Esophagus muscularis mucosa (tissue), 4 donors: ENCODE measurements at regions of chr12 and their contacts with region 1.

Region 1: GRCh38 chr12:106302401-106303201 is at the start of gene TCP11L2:
- DNase-seq: peak; percentile 97
- H3K4me3 ChIP-seq: peak within 1 kb of the TSS; percentile 83 to 97 (median 94)
- H3K27ac ChIP-seq: peak within 1 kb of the TSS; percentile 87 to 97 (median 97)
- H3K4me1 ChIP-seq: peaks cover 47 to 67% (median 59%) of the 10 kb centered on the region in 4 donors
- H3K27me3 ChIP-seq: no peaks in the 10 kb centered on the region
- CTCF ChIP-seq: no peak
- EP300 ChIP-seq: no peak
- POLR2A ChIP-seq: peak; percentile 55
- total RNA-seq, gene TCP11L2: 32.1 to 52.3 (median 39.5) TPM

Region 2: DNA sequence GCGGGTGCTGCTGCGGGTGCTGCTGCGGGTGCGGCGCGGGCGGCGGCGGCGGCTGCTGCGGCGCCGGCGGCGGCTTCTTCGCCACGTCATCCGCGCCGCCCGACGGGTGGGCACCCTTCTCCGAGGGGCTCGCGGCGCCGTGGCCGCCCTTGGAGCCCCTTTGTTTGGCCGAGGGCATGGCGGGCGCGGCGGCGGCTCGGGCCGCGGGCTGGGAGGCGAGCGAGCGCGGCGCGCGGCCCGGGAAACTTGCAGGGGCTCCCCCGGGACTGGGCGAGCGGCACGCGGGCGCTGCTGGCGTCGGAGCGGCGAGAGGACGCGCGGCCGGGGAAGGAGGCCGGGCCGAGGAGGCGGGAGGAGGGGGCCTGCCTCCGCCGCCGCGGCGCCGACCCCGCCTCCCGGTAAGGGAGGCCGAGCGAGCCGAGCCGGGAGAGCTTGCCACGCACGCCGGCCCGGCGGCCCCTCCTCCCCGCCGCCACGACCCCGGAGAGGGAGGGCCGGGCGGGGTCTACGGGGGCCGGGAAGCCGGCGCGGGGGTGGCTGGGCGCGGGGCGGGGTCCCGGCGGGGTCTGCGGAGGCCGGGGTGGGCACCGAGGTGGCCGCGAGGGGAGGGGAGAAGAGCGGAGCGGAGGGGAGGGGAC is 54.8 kb before region 1 on chr12 and contains the start of gene CKAP4:
- intact Hi-C with region 1: loop called (anchors 5 kb)
- DNase-seq: no peak
- H3K4me3 ChIP-seq: peak within 1 kb of the TSS; percentile 74 to 95 (median 86)
- H3K27ac ChIP-seq: peak within 1 kb of the TSS; percentile 93 to 100 (median 96)
- H3K4me1 ChIP-seq: peaks cover 40 to 54% (median 52%) of the 10 kb centered on the region in 4 donors
- H3K27me3 ChIP-seq: no peaks in the 10 kb centered on the region
- CTCF ChIP-seq: no peak
- EP300 ChIP-seq: no peak
- POLR2A ChIP-seq: no peak
- total RNA-seq, gene CKAP4: 28.7 to 51.6 (median 38.8) TPM

Region 3: GRCh38 chr12:106357549-106358395 is 55.2 kb after region 1 on chr12 and contains the start of gene POLR3B:
- intact Hi-C with region 1: loop called (anchors 5 kb)
- DNase-seq: peak; percentile 99
- H3K4me3 ChIP-seq: peak within 1 kb of the TSS; percentile 72 to 88 (median 78)
- H3K27ac ChIP-seq: peak within 1 kb of the TSS; percentile 89 to 96 (median 93)
- H3K4me1 ChIP-seq: peaks cover 13 to 30% (median 23%) of the 10 kb centered on the region in 4 donors
- H3K27me3 ChIP-seq: no peaks in the 10 kb centered on the region
- CTCF ChIP-seq: peak; percentile 88 to 94 (median 91)
- EP300 ChIP-seq: no peak
- POLR2A ChIP-seq: peak; percentile 73
- total RNA-seq, gene POLR3B: 4.2 to 6.1 (median 5.3) TPM